Left lung (tissue), 14 donors: ENCODE measurements at regions of chr2 and their contacts with region 1.

Region 1: GRCh38 chr2:186559848-186560247 is 30.0 kb upstream of the ITGAV start:
- DNase-seq: no peak
- ATAC-seq: no peak
- H3K4me3 ChIP-seq: no peak overlapping the region
- H3K27ac ChIP-seq: no peak overlapping the region
- H3K4me1 ChIP-seq: no peaks in the 10 kb centered on the region
- H3K27me3 ChIP-seq: no peaks in the 10 kb centered on the region
- CTCF ChIP-seq: no peak

Region 2: GRCh38 chr2:186422226-186422625 is 137.6 kb before region 1 on chr2:
- intact Hi-C with region 1: no loop called
- DNase-seq: peak in 2 of 4 donors; percentile 62 to 80
- ATAC-seq: peak; percentile 43
- H3K4me3 ChIP-seq: no peak overlapping the region
- H3K27ac ChIP-seq: no peak overlapping the region
- H3K4me1 ChIP-seq: no peaks in the 10 kb centered on the region
- H3K27me3 ChIP-seq: peaks cover 0 to 5% of the 10 kb centered on the region in 2 donors
- CTCF ChIP-seq: no peak

Region 3: GRCh38 chr2:186518945-186519344 is 40.9 kb before region 1 on chr2:
- intact Hi-C with region 1: no loop called
- DNase-seq: no peak
- ATAC-seq: peak; percentile 77
- H3K4me3 ChIP-seq: no peak overlapping the region
- H3K27ac ChIP-seq: no peak overlapping the region
- H3K4me1 ChIP-seq: no peaks in the 10 kb centered on the region
- H3K27me3 ChIP-seq: no peaks in the 10 kb centered on the region
- CTCF ChIP-seq: no peak

Region 4: GRCh38 chr2:186687807-186688211 is 128.0 kb after region 1 on chr2:
- intact Hi-C with region 1: no loop called
- DNase-seq: peak in 1 of 4 donors; percentile 4
- ATAC-seq: no peak
- H3K4me3 ChIP-seq: no peak overlapping the region
- H3K27ac ChIP-seq: no peak overlapping the region
- H3K4me1 ChIP-seq: no peaks in the 10 kb centered on the region
- H3K27me3 ChIP-seq: no peaks in the 10 kb centered on the region
- CTCF ChIP-seq: no peak

Region 5: GRCh38 chr2:187233811-187234210 is 674.0 kb after region 1 on chr2:
- intact Hi-C with region 1: loop called in 1 of 2 experiments (anchors 10 kb)
- DNase-seq: no peak
- ATAC-seq: no peak
- H3K4me3 ChIP-seq: no peak overlapping the region
- H3K27ac ChIP-seq: no peak overlapping the region
- H3K4me1 ChIP-seq: no peaks in the 10 kb centered on the region
- H3K27me3 ChIP-seq: no peaks in the 10 kb centered on the region
- CTCF ChIP-seq: no peak